Left ventricle myocardium inferior (tissue), 1 donor: ENCODE measurements at regions of chr1 and their contacts with region 1.

Region 1: GRCh38 chr1:224753491-224753890 is 137.4 kb downstream of the CNIH3 start:
- DNase-seq: no peak
- H3K4me3 ChIP-seq: no peak overlapping the region
- H3K27ac ChIP-seq: no peak overlapping the region
- H3K4me1 ChIP-seq: no peaks in the 10 kb centered on the region
- H3K27me3 ChIP-seq: peaks cover 30% of the 10 kb centered on the region
- CTCF ChIP-seq: no peak

Region 2: DNA sequence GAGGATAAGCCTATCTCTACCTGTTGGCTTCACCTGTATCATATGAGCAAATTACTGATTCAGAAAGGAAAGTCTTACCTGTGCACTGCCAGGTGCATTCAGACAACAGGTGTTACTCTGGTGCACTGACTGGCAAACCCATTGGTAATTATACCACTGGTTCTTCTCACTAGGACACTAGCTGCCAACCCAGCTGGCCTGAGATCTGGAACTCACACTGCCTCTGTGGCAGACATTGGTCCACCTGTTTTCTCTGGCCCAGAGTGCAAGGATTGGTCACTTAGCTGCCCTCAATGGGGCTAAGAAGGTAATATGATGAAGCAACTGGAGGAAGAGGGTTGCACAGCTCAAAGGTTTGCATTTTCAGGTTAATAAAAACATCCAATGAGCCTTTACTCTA is 35.8 kb after region 1 on chr1:
- intact Hi-C with region 1: loop called (anchors 2 kb)
- DNase-seq: no peak
- H3K4me3 ChIP-seq: no peak overlapping the region
- H3K27ac ChIP-seq: no peak overlapping the region
- H3K4me1 ChIP-seq: no peaks in the 10 kb centered on the region
- H3K27me3 ChIP-seq: no peaks in the 10 kb centered on the region
- CTCF ChIP-seq: no peak